Cardiac septum (tissue), 1 donor: ENCODE measurements at regions of chr1 and their contacts with region 1.

Region 1: GRCh38 chr1:110412576-110412975 is 5.1 kb upstream of the LAMTOR5 start:
- DNase-seq: no peak

Region 2: DNA sequence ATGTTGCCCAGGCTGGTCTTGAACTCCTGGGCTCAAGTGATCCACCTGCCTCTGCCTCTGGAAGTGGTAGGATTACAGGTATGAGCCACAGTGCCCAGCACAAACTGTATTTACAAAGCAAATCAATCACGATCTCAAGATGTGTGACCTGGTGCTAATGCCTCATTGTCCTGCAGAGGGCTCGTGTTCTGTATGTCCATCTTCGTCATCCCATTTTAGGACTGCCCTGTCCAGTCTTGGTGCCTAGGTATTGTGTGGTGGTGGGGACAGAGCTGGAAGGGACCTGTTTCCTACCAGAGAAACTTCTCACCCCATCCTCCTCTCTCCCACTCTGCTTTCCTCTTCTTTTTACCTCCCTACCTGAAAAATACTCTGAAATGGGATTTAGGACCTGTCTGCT is 58.6 kb after region 1 on chr1:
- intact Hi-C with region 1: no loop called
- DNase-seq: peak; percentile 12

Region 3: DNA sequence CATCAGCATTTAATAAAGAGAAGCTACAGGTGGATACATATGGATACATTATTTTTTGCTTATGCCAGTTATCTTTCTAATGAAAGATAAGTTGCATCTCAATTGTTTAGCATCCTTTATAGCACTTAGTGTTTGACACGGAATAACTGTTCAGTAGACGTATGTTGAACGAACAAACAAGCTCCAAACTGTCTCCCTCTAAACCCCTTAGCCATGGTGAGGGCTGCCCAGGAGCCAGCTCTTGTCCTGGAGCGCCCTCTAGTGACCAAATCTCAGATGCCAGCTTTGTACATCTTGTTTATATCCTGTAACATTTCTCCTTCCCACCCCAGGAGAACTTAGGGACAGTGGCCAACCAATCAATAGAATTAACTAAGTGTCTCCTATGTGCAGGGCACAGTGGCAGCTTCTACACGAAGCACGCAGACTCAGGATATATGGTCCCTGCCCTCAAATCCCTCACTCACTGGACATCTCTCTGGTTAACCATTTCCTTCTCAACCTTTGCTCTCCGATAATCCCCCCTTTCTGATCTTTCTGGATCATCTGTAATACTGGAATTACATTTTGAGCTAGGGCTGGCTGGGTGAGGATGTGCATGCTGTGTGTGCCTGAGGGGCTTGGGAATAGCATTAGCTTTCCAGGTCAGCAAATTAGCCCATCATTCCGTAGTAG is 83.5 kb after region 1 on chr1:
- intact Hi-C with region 1: loop called (anchors 2 kb)
- DNase-seq: no peak